Caco-2 (cell line): ENCODE measurements at regions of chr9 and their contacts with region 1.

Region 1: GRCh38 chr9:99628849-99629620 is 192.7 kb upstream of the NR4A3 start:
- DNase-seq: no peak
- H3K4me3 ChIP-seq: no peak overlapping the region
- H3K4me3 Mint-ChIP-seq: no peak overlapping the region
- H3K27ac Mint-ChIP-seq: no peak overlapping the region
- H3K4me1 ChIP-seq: no peaks in the 10 kb centered on the region
- H3K4me1 Mint-ChIP-seq: no peaks in the 10 kb centered on the region
- H3K27me3 ChIP-seq: no peaks in the 10 kb centered on the region
- H3K27me3 Mint-ChIP-seq: no peaks in the 10 kb centered on the region
- CTCF ChIP-seq: no peak

Region 2: GRCh38 chr9:99680191-99680590 is 51.2 kb after region 1 on chr9:
- CTCF ChIA-PET with region 1: no interaction called
- POLR2A ChIA-PET with region 1: no interaction called
- intact Hi-C with region 1: loop called (anchors 10 kb)
- DNase-seq: no peak
- H3K4me3 ChIP-seq: no peak overlapping the region
- H3K4me3 Mint-ChIP-seq: no peak overlapping the region
- H3K27ac Mint-ChIP-seq: no peak overlapping the region
- H3K4me1 ChIP-seq: no peaks in the 10 kb centered on the region
- H3K4me1 Mint-ChIP-seq: no peaks in the 10 kb centered on the region
- H3K27me3 ChIP-seq: no peaks in the 10 kb centered on the region
- H3K27me3 Mint-ChIP-seq: no peaks in the 10 kb centered on the region
- CTCF ChIP-seq: no peak